ENCODE measurements at regions of chr1 and their contacts with region 1.

Region 1: DNA sequence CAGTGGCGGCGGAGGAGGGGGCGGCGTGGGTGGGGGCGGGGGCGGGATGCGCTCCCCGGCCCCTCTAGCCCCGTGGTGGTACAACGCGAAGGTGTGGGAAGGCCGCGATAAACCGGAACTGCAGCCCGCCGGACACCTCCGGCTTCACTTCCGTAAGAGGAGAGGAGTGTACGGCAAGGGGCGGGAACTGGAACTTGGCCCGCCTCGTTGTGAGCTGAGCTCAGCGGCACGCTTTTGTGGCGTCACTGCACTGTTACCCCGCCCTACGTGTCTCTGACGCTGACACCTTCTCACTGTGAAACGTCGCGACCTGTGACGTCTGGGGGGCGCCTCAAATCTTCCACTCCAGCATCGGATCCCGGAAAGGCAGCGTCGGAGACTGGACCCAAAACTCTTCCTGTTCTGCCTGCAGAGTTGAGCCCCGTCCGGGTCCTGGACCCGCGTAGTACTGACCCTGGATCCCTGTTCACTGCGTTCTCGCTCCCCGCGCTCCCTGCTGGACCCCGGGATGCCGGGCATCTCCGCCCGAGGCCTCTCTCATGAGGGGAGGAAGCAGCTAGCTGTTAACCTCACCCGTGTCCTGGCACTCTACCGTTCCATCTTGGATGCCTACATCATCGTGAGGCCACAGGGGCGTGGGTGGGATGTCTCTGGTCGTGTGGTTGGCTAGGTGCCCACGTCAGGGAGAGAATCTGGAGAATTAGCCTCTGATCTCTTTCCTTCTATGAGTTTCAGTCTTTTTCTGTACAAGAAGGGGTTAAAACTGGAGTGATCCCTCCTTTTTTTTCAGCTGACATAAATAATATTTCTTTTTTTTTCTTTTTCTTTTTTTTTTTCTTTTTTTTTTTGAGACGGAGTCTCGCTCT is at the start of gene ISG20L2:
- DNase-seq: peak; percentile 87 to 99 (median 97)
- H3K4me3 ChIP-seq: peak within 1 kb of the TSS; percentile 42 to 99 (median 83)
- H3K27ac ChIP-seq: peak within 1 kb of the TSS; percentile 27 to 99 (median 94)
- H3K27me3 ChIP-seq: no peaks in the 10 kb centered on the region
- CTCF ChIP-seq: peak in 21 of 56 donors; percentile 1 to 48 (median 19)
- total RNA-seq, gene ISG20L2: 16.3 to 48.9 (median 30.2) TPM

Region 2: GRCh38 chr1:156500797-156501499 is 227.9 kb before region 1 on chr1:
- intact Hi-C with region 1: loop called in 1 of 2 experiments (anchors 10 kb)
- DNase-seq: peak; percentile 87 to 97 (median 94)
- H3K4me3 ChIP-seq: peak overlapping the region; percentile 75 to 100 (median 98)
- H3K27ac ChIP-seq: peak overlapping the region; percentile 97 to 100 (median 100)
- H3K27me3 ChIP-seq: no peaks in the 10 kb centered on the region
- CTCF ChIP-seq: peak in 54 of 56 donors; percentile 29 to 77 (median 58)

Region 3: DNA sequence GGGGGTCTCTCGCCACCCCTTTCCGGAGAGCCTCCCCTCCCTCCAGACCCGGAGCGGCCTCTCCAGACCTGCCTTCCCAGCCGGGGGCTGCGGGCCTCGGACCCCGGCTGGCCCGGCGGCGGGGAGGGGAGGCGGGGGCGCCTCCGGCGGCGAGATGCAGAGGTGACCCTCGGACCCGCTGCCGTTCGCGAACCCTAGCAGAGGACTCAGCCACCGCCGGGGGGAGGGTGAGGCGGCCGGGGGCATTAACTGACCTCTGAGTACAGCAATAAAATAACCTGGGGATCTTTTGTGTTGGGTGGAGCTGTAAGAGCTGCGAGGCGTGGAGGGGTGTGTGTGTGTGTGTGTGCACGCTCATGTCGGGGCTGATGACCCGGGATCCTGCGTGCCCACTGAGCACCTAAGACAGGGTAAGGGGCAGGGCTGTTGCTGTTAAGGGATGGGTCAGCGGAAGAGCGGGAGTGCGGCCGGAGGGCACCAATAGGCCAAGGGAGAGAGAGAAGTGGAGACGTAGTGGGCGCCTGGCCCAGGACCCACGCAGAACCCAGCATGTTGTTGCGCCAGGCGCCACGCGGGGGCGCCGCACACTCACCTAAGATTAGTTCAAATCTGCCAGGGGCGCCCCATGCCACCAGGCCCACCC is 103.3 kb before region 1 on chr1:
- intact Hi-C with region 1: loop called in 1 of 2 experiments (anchors 10 kb)
- DNase-seq: peak in 8 of 10 donors; percentile 61 to 73 (median 68)
- H3K4me3 ChIP-seq: peak overlapping the region in 58 of 59 donors; percentile 27 to 74 (median 56)
- H3K27ac ChIP-seq: peak overlapping the region in 55 of 59 donors; percentile 26 to 99 (median 79)
- H3K27me3 ChIP-seq: peaks cover 0 to 29% (median 0%) of the 10 kb centered on the region in 45 donors
- CTCF ChIP-seq: peak; percentile 67 to 95 (median 84)

Region 4: GRCh38 chr1:156689035-156689952 is 39.5 kb before region 1 on chr1:
- intact Hi-C with region 1: loop called (anchors 1 to 5 kb)
- DNase-seq: peak; percentile 56 to 82 (median 69)
- H3K4me3 ChIP-seq: peak overlapping the region in 44 of 59 donors; percentile 2 to 54 (median 26)
- H3K27ac ChIP-seq: no peak overlapping the region
- H3K27me3 ChIP-seq: peaks cover 0 to 35% (median 4%) of the 10 kb centered on the region in 45 donors
- CTCF ChIP-seq: peak; percentile 63 to 96 (median 92)

Region 5: DNA sequence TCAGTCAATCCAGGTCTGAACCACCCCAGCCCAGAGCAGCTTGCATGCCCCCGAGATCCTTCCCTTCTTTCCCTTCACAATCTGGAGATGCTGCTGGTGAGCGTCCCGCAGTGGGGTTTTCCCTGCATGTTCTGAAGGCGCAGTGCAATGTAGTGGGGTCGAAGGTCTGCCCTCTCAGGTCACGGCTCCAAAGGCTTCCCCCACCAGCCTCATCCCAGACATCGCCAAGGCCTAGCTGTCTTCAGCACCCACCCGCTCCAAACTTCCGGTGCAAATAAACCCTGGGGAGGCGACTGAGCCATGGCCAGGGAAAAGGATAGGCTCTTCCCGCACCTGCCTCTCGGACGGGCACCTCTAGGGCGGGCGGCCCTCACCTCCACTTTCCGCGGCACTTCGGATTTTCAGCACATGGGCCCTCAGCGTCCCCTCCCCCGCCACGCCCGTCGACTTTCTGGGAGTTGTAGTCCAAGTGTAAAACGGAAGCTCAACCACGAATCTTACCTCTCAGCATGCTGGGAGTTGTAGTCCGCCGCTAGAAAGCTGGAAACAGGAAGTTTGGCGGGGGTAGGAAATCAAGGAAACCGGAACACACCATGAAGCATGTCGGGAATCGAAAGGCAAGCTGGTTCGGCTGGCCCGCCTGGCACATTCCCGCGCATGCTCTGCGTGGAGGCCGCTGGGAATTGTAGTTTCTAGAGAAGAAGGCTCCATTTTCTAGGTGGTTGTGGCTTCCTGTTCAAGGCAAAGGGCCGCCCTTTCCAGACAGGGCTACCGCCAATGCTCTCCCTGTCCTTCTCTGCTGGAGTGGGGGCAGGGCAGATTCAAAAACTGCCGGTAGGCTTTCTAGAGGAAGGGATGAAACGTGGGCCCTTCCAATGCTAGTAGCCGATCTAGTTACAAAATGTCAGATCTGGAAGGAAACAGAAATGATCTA is 12.1 kb after region 1 on chr1 and contains the start of gene MRPL24:
- intact Hi-C with region 1: loop called in 1 of 2 experiments (anchors 1 kb)
- DNase-seq: peak; percentile 97 to 99 (median 98)
- H3K4me3 ChIP-seq: peak within 1 kb of the TSS; percentile 47 to 98 (median 83)
- H3K27ac ChIP-seq: peak within 1 kb of the TSS; percentile 79 to 100 (median 97)
- H3K27me3 ChIP-seq: no peaks in the 10 kb centered on the region
- CTCF ChIP-seq: peak in 18 of 56 donors; percentile 8 to 43 (median 26)
- total RNA-seq, gene MRPL24: 38.0 to 78.2 (median 53.2) TPM

Region 6: GRCh38 chr1:156767101-156767878 is 38.5 kb after region 1 on chr1 and contains the start of gene PRCC:
- intact Hi-C with region 1: loop called in 1 of 2 experiments (anchors 1 kb)
- DNase-seq: peak; percentile 98 to 100 (median 100)
- H3K4me3 ChIP-seq: peak within 1 kb of the TSS; percentile 72 to 99 (median 95)
- H3K27ac ChIP-seq: peak within 1 kb of the TSS; percentile 64 to 99 (median 96)
- H3K27me3 ChIP-seq: no peaks in the 10 kb centered on the region
- CTCF ChIP-seq: peak in 30 of 56 donors; percentile 3 to 52 (median 17)
- total RNA-seq, gene PRCC: 46.7 to 90.4 (median 66.7) TPM

Region 7: GRCh38 chr1:156892190-156893047 is 163.6 kb after region 1 on chr1:
- intact Hi-C with region 1: loop called in 1 of 2 experiments (anchors 5 kb)
- DNase-seq: peak; percentile 66 to 86 (median 70)
- H3K4me3 ChIP-seq: peak overlapping the region in 57 of 59 donors; percentile 1 to 63 (median 39)
- H3K27ac ChIP-seq: peak overlapping the region in 20 of 59 donors; percentile 38 to 89 (median 81)
- H3K27me3 ChIP-seq: peaks cover 0 to 36% (median 20%) of the 10 kb centered on the region in 45 donors
- CTCF ChIP-seq: peak; percentile 59 to 92 (median 82)

Measured in dorsolateral prefrontal cortex (tissue), 120 donors.